Ascending aorta (tissue), 2 donors: ENCODE measurements at regions of chr12 and their contacts with region 1.

Region 1: DNA sequence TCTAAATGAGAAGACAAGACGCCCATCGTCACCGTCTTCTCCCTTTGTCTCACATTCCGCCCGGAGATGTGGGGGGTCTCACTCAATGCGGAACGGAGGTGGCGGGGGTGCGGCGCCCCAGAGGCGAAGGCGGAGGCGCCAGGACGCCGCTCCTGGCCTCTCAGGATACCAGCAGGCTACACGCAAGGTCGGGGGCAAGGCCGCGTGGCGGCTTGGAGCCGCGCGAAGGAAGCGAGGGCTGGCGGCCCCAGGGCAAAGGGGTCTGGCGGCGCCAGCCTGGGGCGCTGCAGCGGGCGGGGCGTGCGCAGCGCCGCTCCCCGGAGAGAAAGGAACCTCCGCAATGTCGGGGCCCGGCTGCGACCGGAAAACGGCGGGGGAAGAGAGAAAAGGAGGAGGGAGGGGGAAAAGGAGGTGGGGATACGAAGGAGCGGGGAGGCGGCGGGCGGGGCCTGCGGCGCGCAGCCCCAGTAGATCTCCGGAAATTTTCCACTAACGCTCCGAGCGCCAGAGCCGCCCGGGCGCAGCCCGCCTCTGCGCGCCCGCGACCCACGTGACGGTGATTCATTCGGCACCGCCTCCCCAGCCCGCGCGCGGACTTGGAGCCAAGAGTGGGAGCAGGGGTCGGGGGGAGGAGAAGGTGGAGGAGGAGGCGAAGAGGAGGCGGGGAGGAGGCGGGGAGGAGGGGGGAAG is 10.5 kb upstream of the SLC38A2 start:
- DNase-seq: peak; percentile 79 to 98
- H3K4me3 ChIP-seq: peak overlapping the region; percentile 89 to 95
- H3K27ac ChIP-seq: peak overlapping the region; percentile 95 to 100
- H3K4me1 ChIP-seq: peaks cover 14 to 35% of the 10 kb centered on the region in 2 donors
- H3K27me3 ChIP-seq: no peaks in the 10 kb centered on the region
- CTCF ChIP-seq: peak in 1 of 3 experiments; percentile 16

Region 2: GRCh38 chr12:46372544-46373110 is 10.5 kb before region 1 on chr12 and contains the start of gene SLC38A2:
- intact Hi-C with region 1: loop called (anchors 1 kb)
- DNase-seq: peak; percentile 90 to 99
- H3K4me3 ChIP-seq: peak within 1 kb of the TSS; percentile 94 to 98
- H3K27ac ChIP-seq: peak within 1 kb of the TSS; percentile 97 to 98
- H3K4me1 ChIP-seq: peaks cover 4 to 15% of the 10 kb centered on the region in 2 donors
- H3K27me3 ChIP-seq: no peaks in the 10 kb centered on the region
- CTCF ChIP-seq: no peak
- total RNA-seq, gene SLC38A2: 384 TPM

Region 3: GRCh38 chr12:46459861-46460545 is 76.9 kb after region 1 on chr12:
- intact Hi-C with region 1: loop called (anchors 5 kb)
- DNase-seq: no peak
- H3K4me3 ChIP-seq: no peak overlapping the region
- H3K27ac ChIP-seq: peak overlapping the region; percentile 76 to 81
- H3K4me1 ChIP-seq: peaks cover 0 to 40% of the 10 kb centered on the region in 2 donors
- H3K27me3 ChIP-seq: no peaks in the 10 kb centered on the region
- CTCF ChIP-seq: no peak

Region 4: DNA sequence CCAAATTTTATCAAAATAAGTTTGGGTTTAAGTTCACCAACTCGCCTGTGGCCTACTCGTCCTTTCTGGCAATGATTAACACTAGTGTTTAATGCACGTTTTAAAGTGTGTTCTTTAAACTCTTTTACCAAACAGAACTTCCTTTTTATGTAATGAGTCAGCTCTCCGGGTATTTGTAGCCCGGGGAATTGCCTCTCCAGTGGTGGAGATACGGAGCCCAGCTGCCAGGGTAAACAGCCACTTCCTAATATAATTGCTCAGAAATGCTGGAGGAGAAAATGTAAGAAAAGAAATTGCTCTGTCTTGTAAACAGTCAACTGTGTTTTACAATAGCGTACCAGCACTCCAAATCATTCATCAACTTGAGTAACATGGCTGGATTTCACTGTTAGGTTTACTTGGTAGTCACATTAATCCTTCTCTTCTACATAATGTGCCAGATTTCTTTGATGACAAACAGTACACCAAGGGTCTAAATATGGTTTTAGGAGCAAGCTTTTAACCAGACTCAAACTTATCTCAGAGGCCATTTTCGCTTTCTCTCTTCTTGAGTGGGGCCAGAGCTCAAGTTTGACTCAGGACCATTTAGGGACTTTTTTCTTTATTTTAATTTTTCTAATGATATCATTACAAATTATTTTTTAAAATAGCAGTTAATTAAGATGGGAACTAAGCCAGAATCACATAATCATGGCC is 90.7 kb after region 1 on chr12:
- intact Hi-C with region 1: loop called (anchors 2 kb)
- DNase-seq: peak; percentile 30 to 92
- H3K4me3 ChIP-seq: peak overlapping the region; percentile 14 to 37
- H3K27ac ChIP-seq: peak overlapping the region; percentile 86 to 93
- H3K4me1 ChIP-seq: peaks cover 4 to 23% of the 10 kb centered on the region in 2 donors
- H3K27me3 ChIP-seq: no peaks in the 10 kb centered on the region
- CTCF ChIP-seq: no peak

Region 5: DNA sequence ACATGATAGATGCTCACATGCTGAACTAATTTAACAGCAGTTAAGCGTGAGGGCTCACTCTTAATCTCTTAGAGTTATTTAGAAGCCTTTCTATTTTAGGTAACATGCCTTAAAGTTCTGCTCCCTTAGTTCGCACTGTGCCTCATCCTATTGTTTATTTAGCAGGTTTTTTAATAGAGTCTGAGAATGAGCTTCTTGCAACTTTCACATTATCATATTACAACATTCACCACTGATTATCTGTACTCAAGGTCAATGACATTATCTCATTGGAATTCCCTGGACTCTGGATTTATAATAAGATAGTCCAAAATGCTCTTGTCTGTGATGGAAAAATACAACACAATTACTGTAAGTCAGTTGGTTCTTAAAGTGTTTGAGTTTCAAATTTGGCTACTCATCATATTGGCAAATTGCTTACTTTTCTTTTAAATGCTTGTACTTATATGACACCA is 173.0 kb after region 1 on chr12:
- intact Hi-C with region 1: loop called (anchors 5 kb)
- DNase-seq: no peak
- H3K4me3 ChIP-seq: peak overlapping the region in 1 of 2 donors; percentile 7
- H3K27ac ChIP-seq: peak overlapping the region in 1 of 2 donors; percentile 6
- H3K4me1 ChIP-seq: peaks cover 0 to 20% of the 10 kb centered on the region in 2 donors
- H3K27me3 ChIP-seq: no peaks in the 10 kb centered on the region
- CTCF ChIP-seq: no peak

Region 6: GRCh38 chr12:46577063-46577776 is 194.1 kb after region 1 on chr12:
- intact Hi-C with region 1: loop called (anchors 5 kb)
- DNase-seq: no peak
- H3K4me3 ChIP-seq: no peak overlapping the region
- H3K27ac ChIP-seq: peak overlapping the region; percentile 62 to 79
- H3K4me1 ChIP-seq: peaks cover 4 to 34% of the 10 kb centered on the region in 2 donors
- H3K27me3 ChIP-seq: no peaks in the 10 kb centered on the region
- CTCF ChIP-seq: no peak

Region 7: DNA sequence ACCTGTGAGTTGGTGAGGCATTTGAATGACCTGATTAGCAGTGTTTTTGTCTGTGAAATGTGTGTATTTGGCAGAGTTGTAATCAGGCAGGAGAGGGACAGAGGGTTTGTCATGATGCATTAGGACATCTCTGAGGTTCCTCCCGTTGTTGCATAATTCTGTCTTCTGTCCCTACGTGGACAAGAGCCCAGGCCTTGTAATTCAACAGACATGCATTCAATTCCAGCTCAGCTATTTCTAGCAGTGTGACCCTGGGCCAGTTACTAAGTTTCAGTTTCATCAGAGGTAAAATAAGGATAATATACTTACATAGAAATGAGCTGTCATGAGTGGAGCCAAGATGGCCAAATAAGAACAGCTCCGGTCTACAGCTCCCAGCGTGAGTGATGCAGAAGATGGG is 234.1 kb after region 1 on chr12:
- intact Hi-C with region 1: loop called (anchors 5 kb)
- DNase-seq: peak; percentile 12 to 80
- H3K4me3 ChIP-seq: no peak overlapping the region
- H3K27ac ChIP-seq: peak overlapping the region; percentile 28 to 50
- H3K4me1 ChIP-seq: peaks cover 0 to 7% of the 10 kb centered on the region in 2 donors
- H3K27me3 ChIP-seq: no peaks in the 10 kb centered on the region
- CTCF ChIP-seq: no peak